ENCODE measurements at regions of chr10 and their contacts with region 1.

Region 1: DNA sequence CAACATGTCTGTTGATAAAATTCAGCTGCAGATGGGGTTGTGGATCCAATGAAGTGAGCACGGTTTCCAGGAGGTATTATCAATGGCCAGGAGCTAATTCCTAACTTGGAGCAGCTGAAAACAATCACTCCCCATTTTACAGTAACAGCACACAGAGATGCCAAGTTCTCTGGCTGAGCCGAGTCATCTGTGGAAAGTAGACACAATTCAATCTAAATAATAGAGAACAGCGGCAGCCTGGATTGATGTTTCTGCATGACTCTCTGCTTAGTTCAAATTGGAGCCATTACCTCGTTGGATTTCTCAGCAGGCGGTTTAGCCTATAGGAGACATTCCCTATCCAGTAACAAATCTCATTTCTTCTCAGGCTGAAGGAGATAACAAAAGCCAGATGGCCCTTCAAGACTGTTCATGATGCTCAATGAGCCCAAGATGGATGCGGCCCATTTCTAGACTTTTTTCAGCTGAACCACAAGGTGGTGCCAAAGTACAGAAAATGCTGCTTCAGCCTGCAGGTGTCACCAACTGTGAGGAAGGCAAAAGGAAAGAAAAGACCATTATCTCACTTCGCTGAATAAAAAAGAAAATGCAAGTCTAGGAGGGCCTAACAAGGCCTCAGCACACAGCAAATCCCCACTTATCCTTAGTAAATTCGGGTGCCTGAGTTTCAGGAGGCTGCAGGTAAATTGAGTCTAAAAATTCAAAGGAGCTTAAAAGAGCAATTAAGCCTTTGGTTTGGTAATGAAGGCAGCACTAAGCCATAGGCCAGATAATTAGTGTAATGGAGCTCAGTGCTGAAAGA is 83.7 kb downstream of the SLC16A9 start:
- DNase-seq: peak; percentile 76
- H3K4me3 ChIP-seq: no peak overlapping the region
- H3K27ac ChIP-seq: peak overlapping the region in 3 of 4 donors; percentile 29 to 68 (median 54)
- H3K4me1 ChIP-seq: peaks cover 0 to 6% (median 2%) of the 10 kb centered on the region in 4 donors
- H3K27me3 ChIP-seq: no peaks in the 10 kb centered on the region
- CTCF ChIP-seq: peak; percentile 79 to 94 (median 89)
- EP300 ChIP-seq: no peak
- POLR2A ChIP-seq: no peak

Region 2: GRCh38 chr10:58952747-58953466 is 673.0 kb before region 1 on chr10:
- intact Hi-C with region 1: loop called (anchors 5 kb)
- DNase-seq: no peak
- H3K4me3 ChIP-seq: no peak overlapping the region
- H3K27ac ChIP-seq: peak overlapping the region; percentile 37 to 70 (median 49)
- H3K4me1 ChIP-seq: peaks cover 0 to 52% (median 38%) of the 10 kb centered on the region in 4 donors
- H3K27me3 ChIP-seq: no peaks in the 10 kb centered on the region
- CTCF ChIP-seq: peak; percentile 27 to 80 (median 64)
- EP300 ChIP-seq: no peak
- POLR2A ChIP-seq: no peak

Region 3: GRCh38 chr10:59362144-59362958 is 263.6 kb before region 1 on chr10 and contains the start of gene FAM13C:
- intact Hi-C with region 1: loop called (anchors 10 kb)
- DNase-seq: peak; percentile 86
- H3K4me3 ChIP-seq: peak within 1 kb of the TSS; percentile 58 to 70 (median 66)
- H3K27ac ChIP-seq: peak within 1 kb of the TSS; percentile 85 to 90 (median 87)
- H3K4me1 ChIP-seq: peaks cover 0 to 48% (median 31%) of the 10 kb centered on the region in 4 donors
- H3K27me3 ChIP-seq: no peaks in the 10 kb centered on the region
- CTCF ChIP-seq: peak in 1 of 4 experiments; percentile 16
- EP300 ChIP-seq: no peak
- POLR2A ChIP-seq: no peak
- total RNA-seq, gene FAM13C: 13.8 to 33.9 (median 22.7) TPM

Region 4: GRCh38 chr10:59906417-59907202 is 280.7 kb after region 1 on chr10 and contains the start of gene CCDC6:
- intact Hi-C with region 1: loop called (anchors 1 kb)
- DNase-seq: peak; percentile 97
- H3K4me3 ChIP-seq: peak within 1 kb of the TSS; percentile 67 to 96 (median 88)
- H3K27ac ChIP-seq: peak within 1 kb of the TSS; percentile 93
- H3K4me1 ChIP-seq: peaks cover 0 to 59% (median 42%) of the 10 kb centered on the region in 4 donors
- H3K27me3 ChIP-seq: no peaks in the 10 kb centered on the region
- CTCF ChIP-seq: peak; percentile 66 to 92 (median 72)
- EP300 ChIP-seq: no peak
- POLR2A ChIP-seq: peak; percentile 77 to 82
- total RNA-seq, gene CCDC6: 59.2 to 97.5 (median 62.2) TPM

Region 5: DNA sequence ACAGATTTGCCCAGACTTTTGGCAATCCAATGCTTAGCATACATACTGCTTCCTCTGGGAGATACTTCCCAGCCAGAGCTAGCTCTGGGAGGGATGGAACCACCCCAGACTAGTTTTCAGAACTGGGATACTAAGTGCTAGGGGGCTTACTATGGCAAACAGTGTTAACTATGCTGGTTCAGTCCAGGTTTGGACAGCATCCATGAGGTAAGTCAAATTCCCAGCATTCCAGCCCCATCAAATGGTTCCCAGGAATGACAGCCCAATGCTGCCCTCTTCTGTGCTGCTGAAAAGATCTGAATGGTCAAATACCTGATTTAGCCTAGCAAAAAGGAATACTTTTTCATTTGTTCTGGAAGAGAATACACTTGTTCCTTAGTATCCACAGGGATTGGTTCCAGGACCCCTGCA is 422.2 kb after region 1 on chr10:
- intact Hi-C with region 1: loop called (anchors 5 kb)
- DNase-seq: no peak
- H3K4me3 ChIP-seq: no peak overlapping the region
- H3K27ac ChIP-seq: no peak overlapping the region
- H3K4me1 ChIP-seq: peaks cover 0 to 6% (median 0%) of the 10 kb centered on the region in 4 donors
- H3K27me3 ChIP-seq: no peaks in the 10 kb centered on the region
- CTCF ChIP-seq: peak in 3 of 4 experiments; percentile 9 to 18 (median 11)
- EP300 ChIP-seq: no peak
- POLR2A ChIP-seq: no peak

Region 6: GRCh38 chr10:60208676-60209269 is 582.9 kb after region 1 on chr10:
- intact Hi-C with region 1: loop called (anchors 2 kb)
- DNase-seq: no peak
- H3K4me3 ChIP-seq: no peak overlapping the region
- H3K27ac ChIP-seq: no peak overlapping the region
- H3K4me1 ChIP-seq: peaks cover 0 to 5% (median 2%) of the 10 kb centered on the region in 4 donors
- H3K27me3 ChIP-seq: no peaks in the 10 kb centered on the region
- CTCF ChIP-seq: peak; percentile 64 to 81 (median 74)
- EP300 ChIP-seq: no peak
- POLR2A ChIP-seq: no peak